Esophagus squamous epithelium (tissue), 5 donors: ENCODE measurements at regions of chr10 and their contacts with region 1.

Region 1: GRCh38 chr10:32346134-32346550 is 816 bp downstream of the EPC1 start:
- DNase-seq: peak; percentile 88
- H3K4me3 ChIP-seq: peak overlapping the region; percentile 94 to 99 (median 97)
- H3K27ac ChIP-seq: peak overlapping the region; percentile 98 to 100 (median 100)
- H3K4me1 ChIP-seq: peaks cover 11 to 77% (median 39%) of the 10 kb centered on the region in 3 donors
- H3K27me3 ChIP-seq: no peaks in the 10 kb centered on the region
- CTCF ChIP-seq: peak; percentile 93 to 100 (median 98)
- POLR2A ChIP-seq: peak in 1 of 4 donors; percentile 43

Region 2: GRCh38 chr10:32256613-32257437 is 89.3 kb before region 1 on chr10:
- intact Hi-C with region 1: loop called (anchors 5 kb)
- DNase-seq: no peak
- H3K4me3 ChIP-seq: no peak overlapping the region
- H3K27ac ChIP-seq: no peak overlapping the region
- H3K4me1 ChIP-seq: peaks cover 0 to 17% (median 4%) of the 10 kb centered on the region in 3 donors
- H3K27me3 ChIP-seq: no peaks in the 10 kb centered on the region
- CTCF ChIP-seq: peak; percentile 76 to 91 (median 86)
- POLR2A ChIP-seq: no peak